PC-3 (cell line): ENCODE measurements at regions of chr2 and their contacts with region 1.

Region 1: GRCh38 chr2:32330136-32330535 is 26.7 kb upstream of the BIRC6 start:
- DNase-seq: no peak
- ATAC-seq: no peak
- H3K4me3 ChIP-seq: no peak overlapping the region
- H3K27ac ChIP-seq: no peak overlapping the region
- H3K4me1 ChIP-seq: no peaks in the 10 kb centered on the region
- H3K27me3 ChIP-seq: no peaks in the 10 kb centered on the region
- CTCF ChIP-seq: no peak

Region 2: DNA sequence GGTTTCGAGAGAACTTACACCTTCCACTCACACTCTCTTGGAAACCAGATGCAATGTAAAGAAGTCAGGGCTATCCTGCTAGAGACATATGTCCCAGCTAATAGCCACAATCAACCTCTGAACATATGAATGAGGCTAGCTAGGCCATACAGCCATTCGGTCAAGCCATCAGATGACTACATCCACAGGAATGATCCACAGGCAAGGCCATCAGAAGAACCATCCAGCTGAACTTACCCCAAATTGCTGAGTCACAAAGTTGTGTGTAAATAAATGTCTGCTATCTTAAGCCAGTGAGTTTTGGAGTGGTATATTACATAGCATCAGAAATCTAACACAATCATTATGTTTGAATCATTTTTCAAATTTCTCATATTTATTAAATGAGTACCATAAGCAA is 272.0 kb before region 1 on chr2:
- CTCF ChIA-PET with region 1: no interaction called
- POLR2A ChIA-PET with region 1: interaction called, 10 read pairs
- intact Hi-C with region 1: no loop called
- DNase-seq: peak; percentile 38
- ATAC-seq: no peak
- H3K4me3 ChIP-seq: no peak overlapping the region
- H3K27ac ChIP-seq: no peak overlapping the region
- H3K4me1 ChIP-seq: peaks cover 8% of the 10 kb centered on the region; the same call in 1 of the 2 replicates
- H3K27me3 ChIP-seq: no peaks in the 10 kb centered on the region
- CTCF ChIP-seq: no peak

Region 3: DNA sequence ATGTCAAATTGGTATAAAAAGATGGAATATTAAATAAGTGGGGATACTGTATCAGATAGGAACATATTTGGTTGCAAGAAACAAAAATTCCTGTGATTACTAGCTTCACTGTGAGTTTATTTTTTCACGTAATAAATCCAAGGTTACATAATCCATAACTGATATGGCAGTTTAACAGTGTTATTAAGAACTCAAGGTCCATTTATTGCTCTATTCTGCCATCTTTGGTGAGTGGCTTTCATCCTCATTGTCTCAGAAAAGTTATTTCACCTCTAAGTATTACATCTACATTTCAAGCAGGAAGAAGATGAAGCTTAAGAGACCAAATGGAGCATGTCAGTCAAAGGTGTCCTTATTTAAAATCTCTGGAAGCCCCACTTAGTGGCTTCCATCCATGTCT is 15.2 kb before region 1 on chr2:
- CTCF ChIA-PET with region 1: no interaction called
- POLR2A ChIA-PET with region 1: interaction called, 10 read pairs
- intact Hi-C with region 1: no loop called
- DNase-seq: no peak
- ATAC-seq: no peak
- H3K4me3 ChIP-seq: no peak overlapping the region
- H3K27ac ChIP-seq: no peak overlapping the region
- H3K4me1 ChIP-seq: no peaks in the 10 kb centered on the region
- H3K27me3 ChIP-seq: no peaks in the 10 kb centered on the region
- CTCF ChIP-seq: no peak